Transverse colon (tissue), 4 donors: ENCODE measurements at regions of chr4 and their contacts with region 1.

Region 1: GRCh38 chr4:37452952-37453280 is 208.4 kb downstream of the NWD2 start:
- DNase-seq: peak; percentile 75
- H3K4me3 ChIP-seq: peak overlapping the region in 3 of 4 donors; percentile 44 to 58 (median 57)
- H3K27ac ChIP-seq: peak overlapping the region; percentile 73 to 86 (median 84)
- H3K4me1 ChIP-seq: peaks cover 0 to 12% (median 6%) of the 10 kb centered on the region in 4 donors
- H3K27me3 ChIP-seq: peaks cover 24% of the 10 kb centered on the region
- CTCF ChIP-seq: peak; percentile 36 to 82 (median 54)
- EP300 ChIP-seq: no peak
- POLR2A ChIP-seq: no peak

Region 2: DNA sequence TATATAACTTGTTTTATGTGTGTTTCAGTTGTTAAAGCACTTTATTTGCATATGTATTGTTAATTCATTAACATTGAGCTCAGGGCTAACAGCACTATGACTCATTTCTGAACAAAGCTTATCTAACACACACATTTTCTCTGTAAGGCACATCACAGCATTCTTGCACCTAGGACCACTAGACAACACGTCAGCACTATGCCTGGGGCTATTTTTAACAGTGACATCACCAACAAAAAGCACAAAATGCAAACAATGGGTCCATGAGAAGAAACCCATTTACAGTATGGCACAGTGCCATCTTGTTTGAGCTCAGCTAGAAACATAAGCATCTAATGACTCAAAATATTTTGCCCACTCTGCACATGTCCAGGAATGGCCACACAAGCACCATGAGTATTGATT is 108.9 kb after region 1 on chr4:
- in situ Hi-C with region 1: loop called in 1 of 4 experiments (anchors 10 kb)
- intact Hi-C with region 1: loop called (anchors 2 kb)
- DNase-seq: no peak
- H3K4me3 ChIP-seq: no peak overlapping the region
- H3K27ac ChIP-seq: no peak overlapping the region
- H3K4me1 ChIP-seq: no peaks in the 10 kb centered on the region
- H3K27me3 ChIP-seq: no peaks in the 10 kb centered on the region
- CTCF ChIP-seq: no peak
- EP300 ChIP-seq: no peak
- POLR2A ChIP-seq: no peak

Region 3: GRCh38 chr4:37567841-37568240 is 114.9 kb after region 1 on chr4:
- in situ Hi-C with region 1: loop called in 1 of 4 experiments (anchors 10 kb)
- intact Hi-C with region 1: loop called (anchors 2 kb)
- DNase-seq: no peak
- H3K4me3 ChIP-seq: no peak overlapping the region
- H3K27ac ChIP-seq: peak overlapping the region in 2 of 4 donors; percentile 19 to 43
- H3K4me1 ChIP-seq: peaks cover 0 to 11% (median 7%) of the 10 kb centered on the region in 4 donors
- H3K27me3 ChIP-seq: no peaks in the 10 kb centered on the region
- CTCF ChIP-seq: no peak
- EP300 ChIP-seq: no peak
- POLR2A ChIP-seq: no peak